ENCODE measurements at regions of chr4 and their contacts with region 1.

Region 1: DNA sequence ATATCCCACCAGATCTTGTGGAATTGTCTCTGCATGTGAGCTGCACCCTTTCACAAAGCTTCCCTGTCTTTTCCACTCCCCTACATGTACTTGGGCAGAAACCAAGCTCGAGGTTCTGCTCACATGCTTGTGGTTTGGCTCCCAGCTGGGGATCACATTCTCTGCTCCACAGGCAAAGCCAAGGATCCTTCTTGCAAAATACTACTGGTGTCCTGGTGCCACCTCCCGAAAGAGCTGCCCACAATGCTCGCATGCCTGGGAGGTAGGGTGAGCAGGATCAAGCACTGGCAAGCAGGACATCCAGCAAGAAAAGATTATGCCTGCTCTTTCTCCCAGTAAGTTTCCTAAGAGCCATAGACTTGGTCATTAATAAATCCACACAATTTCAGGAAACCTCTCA is 45.1 kb upstream of the PPARGC1A start:
- DNase-seq: no peak
- H3K4me3 Mint-ChIP-seq: no peak overlapping the region
- H3K27ac Mint-ChIP-seq: no peak overlapping the region
- H3K4me1 Mint-ChIP-seq: no peaks in the 10 kb centered on the region
- H3K27me3 Mint-ChIP-seq: no peaks in the 10 kb centered on the region

Region 2: DNA sequence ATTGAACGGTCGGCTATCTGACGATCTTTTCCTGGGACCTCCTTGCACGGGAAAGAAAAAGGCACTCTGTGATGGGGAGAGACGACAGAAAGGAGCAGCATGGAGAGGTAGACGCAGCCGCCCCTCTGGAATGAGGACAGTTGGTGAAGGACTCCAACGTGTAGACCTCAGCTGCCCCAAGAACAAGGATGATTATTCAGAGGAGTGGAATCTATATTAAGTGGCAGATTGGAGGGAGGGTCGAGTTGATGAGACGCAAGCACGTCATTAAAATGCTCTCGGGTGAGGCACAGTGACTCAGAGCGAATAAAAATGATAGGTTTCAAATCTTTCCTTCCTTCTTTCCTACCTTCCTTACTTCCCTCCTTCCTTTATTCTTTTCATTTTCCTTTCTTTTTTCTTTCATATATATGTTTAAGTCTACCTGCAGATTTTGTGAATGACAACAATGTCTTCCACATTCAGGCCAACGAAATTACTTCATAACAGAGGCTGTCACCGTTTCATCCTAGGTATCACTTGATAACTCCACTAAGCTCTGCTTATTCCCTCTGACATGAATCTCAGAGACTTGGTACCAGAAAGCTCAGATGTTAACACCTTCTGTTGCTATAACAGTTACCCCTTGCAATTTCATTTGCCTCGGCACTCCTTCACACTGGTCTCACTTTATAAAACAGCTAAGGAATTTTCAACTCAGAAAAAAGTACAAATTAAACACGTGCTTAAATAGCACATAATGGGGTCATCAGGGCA is 65.0 kb after region 1 on chr4:
- intact Hi-C with region 1: loop called (anchors 10 kb)
- DNase-seq: no peak
- H3K4me3 Mint-ChIP-seq: no peak overlapping the region
- H3K27ac Mint-ChIP-seq: no peak overlapping the region
- H3K4me1 Mint-ChIP-seq: no peaks in the 10 kb centered on the region
- H3K27me3 Mint-ChIP-seq: no peaks in the 10 kb centered on the region

Region 3: GRCh38 chr4:24164054-24164693 is 229.3 kb after region 1 on chr4:
- intact Hi-C with region 1: no loop called
- DNase-seq: no peak
- H3K4me3 Mint-ChIP-seq: no peak overlapping the region
- H3K27ac Mint-ChIP-seq: no peak overlapping the region
- H3K4me1 Mint-ChIP-seq: no peaks in the 10 kb centered on the region
- H3K27me3 Mint-ChIP-seq: no peaks in the 10 kb centered on the region